Activated B cell treated with CpG ODN at 0.5 μM for 24 hours (primary cell): ENCODE measurements at regions of chr17 and their contacts with region 1.

Region 1: DNA sequence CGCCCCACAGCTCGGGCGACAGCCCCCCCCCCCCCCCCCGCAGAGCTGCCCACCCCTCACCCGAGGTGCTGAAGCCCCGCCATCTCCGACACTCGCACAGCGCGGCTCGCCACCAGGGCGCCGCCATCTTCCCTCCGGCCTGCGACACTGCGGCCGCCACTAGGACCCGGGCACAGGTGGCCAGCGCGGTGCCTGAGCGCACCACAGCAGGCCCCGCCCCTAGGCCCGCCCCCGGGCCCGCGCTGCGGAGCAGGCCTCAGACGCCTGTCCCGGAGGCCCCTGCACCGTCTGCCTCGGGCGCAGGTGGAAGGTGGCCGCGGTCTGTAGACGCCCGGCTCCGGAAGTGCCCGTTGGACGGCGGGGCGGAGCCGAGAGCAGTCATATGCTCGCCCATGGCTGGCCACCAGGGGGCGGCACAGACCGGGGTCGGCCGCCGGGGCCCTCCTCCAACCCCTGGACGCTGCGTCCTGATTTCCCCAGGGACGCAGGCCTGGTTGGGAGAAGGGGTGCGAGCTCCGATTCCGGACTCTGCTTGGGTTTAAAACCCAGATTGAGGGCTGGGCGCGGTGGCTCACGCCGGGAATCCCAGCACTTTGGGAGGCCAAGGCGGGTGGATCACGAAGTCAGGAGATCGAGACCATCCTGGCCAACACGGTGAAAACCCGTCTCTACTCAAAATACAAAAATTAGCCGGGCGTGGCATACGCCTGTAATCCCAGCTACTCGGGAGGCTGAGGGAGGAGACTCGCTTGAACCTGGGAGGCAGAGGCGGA is at the start of gene MRPL38:
- DNase-seq: peak; percentile 97
- ATAC-seq: peak; percentile 97
- H3K4me3 Mint-ChIP-seq: peak within 1 kb of the TSS; percentile 90
- H3K27ac Mint-ChIP-seq: peak within 1 kb of the TSS; percentile 92
- H3K4me1 Mint-ChIP-seq: peaks cover 11% of the 10 kb centered on the region
- H3K27me3 Mint-ChIP-seq: no peaks in the 10 kb centered on the region
- CTCF ChIP-seq: peak; percentile 61
- total RNA-seq, gene MRPL38: 132 and 137 TPM in 2 replicates

Region 2: DNA sequence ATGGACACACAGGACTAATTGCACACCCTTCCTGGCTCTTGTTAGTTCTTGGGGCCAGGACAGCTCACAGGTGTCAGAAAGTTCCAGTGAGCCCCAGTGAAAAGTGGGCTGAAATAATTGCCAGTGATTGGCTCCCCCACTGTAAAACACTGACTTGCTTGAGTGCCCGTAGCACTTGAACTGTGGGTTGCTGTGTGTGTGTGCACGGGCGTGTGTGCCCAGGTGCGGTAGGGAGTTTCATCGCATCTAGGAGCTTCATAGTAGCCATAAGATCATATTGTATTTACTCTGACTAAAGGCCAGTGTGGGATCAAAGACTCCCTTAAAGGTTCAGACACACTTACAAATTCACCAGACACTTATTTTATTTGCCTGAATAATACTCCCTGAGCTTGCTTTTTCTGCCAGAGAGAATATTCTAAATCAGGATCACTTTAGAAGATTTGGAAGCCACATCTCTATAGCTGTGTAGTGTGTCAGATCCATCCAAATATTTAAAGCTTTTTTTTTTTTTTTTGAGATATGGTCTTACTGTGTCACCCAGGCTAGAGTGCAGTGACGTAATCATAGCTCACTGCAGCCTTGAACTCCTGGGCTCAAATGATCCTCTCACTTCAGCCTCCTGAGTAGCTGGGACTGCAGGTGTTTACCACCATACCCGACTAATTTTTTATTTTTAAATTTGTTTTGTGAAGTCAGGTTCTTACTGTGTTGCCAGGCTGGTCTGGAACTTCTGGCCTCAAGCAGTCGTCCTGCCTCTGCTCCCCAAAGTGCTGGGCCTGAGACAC is 108.9 kb before region 1 on chr17:
- CTCF ChIA-PET with region 1: no interaction called
- POLR2A ChIA-PET with region 1: no interaction called
- intact Hi-C with region 1: no loop called
- DNase-seq: peak; percentile 3
- ATAC-seq: no peak
- H3K4me3 Mint-ChIP-seq: no peak overlapping the region
- H3K27ac Mint-ChIP-seq: no peak overlapping the region
- H3K4me1 Mint-ChIP-seq: peaks cover 11% of the 10 kb centered on the region
- H3K27me3 Mint-ChIP-seq: no peaks in the 10 kb centered on the region
- CTCF ChIP-seq: no peak

Region 3: GRCh38 chr17:75877752-75878173 is 27.2 kb before region 1 on chr17:
- CTCF ChIA-PET with region 1: interaction called, 3 read pairs
- POLR2A ChIA-PET with region 1: no interaction called
- intact Hi-C with region 1: loop called (anchors 2 kb)
- DNase-seq: peak; percentile 73
- ATAC-seq: peak; percentile 83
- H3K4me3 Mint-ChIP-seq: peak overlapping the region; percentile 82
- H3K27ac Mint-ChIP-seq: peak overlapping the region; percentile 79
- H3K4me1 Mint-ChIP-seq: peaks cover 28% of the 10 kb centered on the region
- H3K27me3 Mint-ChIP-seq: peaks cover 8% of the 10 kb centered on the region
- CTCF ChIP-seq: no peak

Region 4: GRCh38 chr17:75978938-75979704 is 74.2 kb after region 1 on chr17 and contains the starts of genes ACOX1 and TEN1:
- CTCF ChIA-PET with region 1: no interaction called
- POLR2A ChIA-PET with region 1: interaction called, 7 read pairs
- intact Hi-C with region 1: loop called (anchors 1 kb)
- DNase-seq: peak; percentile 91
- ATAC-seq: peak; percentile 94
- H3K4me3 Mint-ChIP-seq: peak within 1 kb of the TSS; percentile 100
- H3K27ac Mint-ChIP-seq: peak within 1 kb of the TSS; percentile 100
- H3K4me1 Mint-ChIP-seq: peaks cover 37% of the 10 kb centered on the region
- H3K27me3 Mint-ChIP-seq: no peaks in the 10 kb centered on the region
- CTCF ChIP-seq: no peak
- total RNA-seq, gene ACOX1: 23.3 and 25.8 TPM in 2 replicates
- total RNA-seq, gene TEN1: 22.7 and 23.2 TPM in 2 replicates

Region 5: DNA sequence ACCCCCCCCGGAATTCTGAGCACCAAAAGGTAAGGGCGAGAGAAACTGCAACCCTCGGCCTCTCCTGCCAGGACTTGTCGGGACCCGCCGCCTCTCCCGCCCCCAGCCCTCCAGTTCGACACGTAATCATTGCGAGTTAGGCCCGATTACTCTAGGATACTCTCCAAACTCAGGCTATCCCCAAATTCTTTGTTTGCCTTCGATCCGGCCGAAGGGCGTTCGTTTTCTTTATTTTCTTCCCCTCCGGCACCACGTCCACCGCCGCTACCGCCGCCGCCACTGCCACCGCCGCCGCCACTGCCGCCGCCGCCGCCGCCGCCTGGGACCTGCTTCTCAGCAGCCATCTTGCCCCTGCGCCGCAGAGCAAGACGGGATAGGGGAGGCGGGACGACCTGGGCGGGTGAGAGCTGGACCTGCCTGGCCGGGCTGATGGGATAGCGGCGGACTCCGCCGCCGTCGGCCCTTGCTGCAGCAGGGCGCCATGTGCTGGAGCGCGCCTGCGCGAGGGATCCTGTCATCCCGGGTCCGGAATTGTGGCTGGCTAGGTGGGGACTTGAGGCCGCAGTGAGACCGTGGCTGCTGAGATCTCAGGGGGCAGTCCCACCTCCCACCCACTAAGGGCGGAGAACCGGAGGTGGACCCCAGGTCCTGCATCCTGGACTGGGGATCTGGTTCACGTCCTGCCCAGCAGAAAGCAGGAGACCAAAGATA is 167.4 kb after region 1 on chr17 and contains the start of gene SRP68:
- CTCF ChIA-PET with region 1: no interaction called
- POLR2A ChIA-PET with region 1: interaction called, 9 read pairs
- intact Hi-C with region 1: loop called (anchors 1 kb)
- DNase-seq: peak; percentile 79
- ATAC-seq: peak; percentile 92
- H3K4me3 Mint-ChIP-seq: peak within 1 kb of the TSS; percentile 94
- H3K27ac Mint-ChIP-seq: peak within 1 kb of the TSS; percentile 90
- H3K4me1 Mint-ChIP-seq: peaks cover 45% of the 10 kb centered on the region
- H3K27me3 Mint-ChIP-seq: peaks cover 26% of the 10 kb centered on the region
- CTCF ChIP-seq: no peak
- total RNA-seq, gene SRP68: 73.7 and 76.1 TPM in 2 replicates